ENCODE measurements at regions of chr13 and their contacts with region 1.

Region 1: GRCh38 chr13:48580185-48580803 is 47.4 kb upstream of the RCBTB2 start:
- DNase-seq: peak; percentile 83
- ATAC-seq: peak; percentile 51
- H3K4me3 Mint-ChIP-seq: no peak overlapping the region
- H3K27ac Mint-ChIP-seq: no peak overlapping the region
- H3K4me1 Mint-ChIP-seq: peaks cover 52% of the 10 kb centered on the region
- H3K27me3 Mint-ChIP-seq: peaks cover 27% of the 10 kb centered on the region

Region 2: GRCh38 chr13:48334534-48335127 is 245.7 kb before region 1 on chr13:
- CTCF ChIA-PET with region 1: interaction called, 129 read pairs
- POLR2A ChIA-PET with region 1: interaction called, 3 read pairs
- DNase-seq: no peak
- ATAC-seq: peak; percentile 71
- H3K4me3 Mint-ChIP-seq: no peak overlapping the region
- H3K27ac Mint-ChIP-seq: no peak overlapping the region
- H3K4me1 Mint-ChIP-seq: peaks cover 25% of the 10 kb centered on the region
- H3K27me3 Mint-ChIP-seq: no peaks in the 10 kb centered on the region

Region 3: GRCh38 chr13:48400850-48401291 is 179.4 kb before region 1 on chr13:
- CTCF ChIA-PET with region 1: interaction called, 23 read pairs
- POLR2A ChIA-PET with region 1: no interaction called
- DNase-seq: no peak
- ATAC-seq: peak; percentile 62
- H3K4me3 Mint-ChIP-seq: peak overlapping the region; percentile 44
- H3K27ac Mint-ChIP-seq: peak overlapping the region; percentile 71
- H3K4me1 Mint-ChIP-seq: peaks cover 64% of the 10 kb centered on the region
- H3K27me3 Mint-ChIP-seq: no peaks in the 10 kb centered on the region

Region 4: DNA sequence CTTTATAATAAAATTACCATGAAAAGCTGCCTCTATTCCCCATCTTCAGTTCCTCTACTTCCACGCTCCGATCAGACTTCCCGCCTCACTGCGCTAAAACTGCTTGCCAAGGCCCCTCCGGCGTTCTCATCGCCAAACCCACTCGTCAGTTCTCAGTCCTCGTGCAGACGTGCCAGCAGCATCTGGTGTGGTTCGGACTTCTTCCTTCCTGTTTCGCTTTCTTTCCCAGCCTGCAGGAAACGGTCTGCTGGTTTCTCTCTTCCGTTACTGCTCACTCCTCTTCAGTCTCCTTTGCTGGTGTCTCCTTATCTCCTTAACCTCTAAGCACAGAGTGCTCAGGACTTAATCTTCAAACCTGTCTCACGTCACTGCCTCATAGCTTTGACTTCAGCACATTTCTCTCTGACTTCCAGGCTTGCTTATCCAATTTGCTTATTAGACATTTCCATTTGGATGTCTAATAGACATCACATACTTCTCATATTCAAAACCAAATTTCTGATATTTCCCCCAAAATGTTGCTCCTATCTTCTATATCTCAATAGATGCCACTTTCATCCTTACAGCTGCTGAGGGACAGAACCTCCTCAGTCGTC is 87.7 kb before region 1 on chr13:
- CTCF ChIA-PET with region 1: interaction called, 19 read pairs
- POLR2A ChIA-PET with region 1: interaction called, 8 read pairs
- DNase-seq: peak; percentile 90
- ATAC-seq: peak; percentile 85
- H3K4me3 Mint-ChIP-seq: no peak overlapping the region
- H3K27ac Mint-ChIP-seq: no peak overlapping the region
- H3K4me1 Mint-ChIP-seq: peaks cover 61% of the 10 kb centered on the region
- H3K27me3 Mint-ChIP-seq: no peaks in the 10 kb centered on the region

Region 5: DNA sequence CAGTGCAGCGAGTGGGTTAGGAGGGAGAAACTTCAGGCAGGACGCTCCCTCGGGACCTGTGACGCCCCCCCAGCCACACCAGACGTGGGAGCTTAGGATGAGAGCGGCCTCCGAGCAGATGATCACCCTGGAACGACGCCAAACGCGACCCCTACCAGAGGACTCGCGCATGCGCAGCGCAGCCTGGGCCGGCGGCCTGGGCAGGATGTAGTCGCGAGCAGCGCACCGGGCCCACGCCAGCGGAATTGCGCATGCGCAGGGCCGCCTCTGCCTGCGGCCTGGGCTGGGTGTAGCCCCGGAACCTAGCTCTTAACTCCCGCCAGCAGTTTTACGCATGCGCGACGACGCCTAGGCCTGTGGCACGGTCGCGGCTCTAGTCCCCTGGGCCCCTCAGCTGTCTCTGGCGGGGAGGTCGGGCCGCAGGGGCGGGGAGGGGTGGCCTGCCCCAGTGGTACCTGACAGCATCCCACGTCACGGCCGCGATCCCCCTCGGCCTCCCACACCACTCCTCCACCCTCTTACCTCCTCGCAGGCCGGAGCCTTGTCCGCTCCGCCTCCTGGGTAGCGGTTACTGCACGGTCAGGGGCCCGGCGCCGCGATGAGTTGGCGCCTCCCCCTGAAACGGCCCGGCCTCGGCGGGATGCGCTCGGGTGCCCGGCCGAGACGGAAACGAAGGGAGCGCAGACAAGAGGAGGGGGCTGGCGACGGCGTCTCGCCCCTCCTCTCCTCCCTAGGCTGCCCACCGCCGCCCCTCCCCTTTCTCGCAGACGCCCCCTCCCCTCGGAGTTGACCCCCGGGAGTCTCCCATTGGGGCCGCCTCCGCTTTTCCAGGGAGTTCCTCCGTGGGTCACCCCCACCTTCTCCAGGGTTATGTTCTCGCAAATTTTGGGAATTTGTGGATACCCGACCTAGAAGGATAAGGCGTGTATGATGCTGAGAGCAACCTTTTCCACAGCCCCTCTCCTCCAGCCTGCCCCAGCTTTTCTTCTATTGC is 47.5 kb before region 1 on chr13 and contains the start of gene RCBTB2:
- CTCF ChIA-PET with region 1: interaction called, 22 read pairs
- POLR2A ChIA-PET with region 1: interaction called, 6 read pairs
- DNase-seq: peak; percentile 99
- ATAC-seq: peak; percentile 93
- H3K4me3 Mint-ChIP-seq: peak within 1 kb of the TSS; percentile 92
- H3K27ac Mint-ChIP-seq: peak within 1 kb of the TSS; percentile 99
- H3K4me1 Mint-ChIP-seq: peaks cover 44% of the 10 kb centered on the region
- H3K27me3 Mint-ChIP-seq: no peaks in the 10 kb centered on the region
- total RNA-seq, gene RCBTB2: 31.0 to 31.5 TPM

Region 6: DNA sequence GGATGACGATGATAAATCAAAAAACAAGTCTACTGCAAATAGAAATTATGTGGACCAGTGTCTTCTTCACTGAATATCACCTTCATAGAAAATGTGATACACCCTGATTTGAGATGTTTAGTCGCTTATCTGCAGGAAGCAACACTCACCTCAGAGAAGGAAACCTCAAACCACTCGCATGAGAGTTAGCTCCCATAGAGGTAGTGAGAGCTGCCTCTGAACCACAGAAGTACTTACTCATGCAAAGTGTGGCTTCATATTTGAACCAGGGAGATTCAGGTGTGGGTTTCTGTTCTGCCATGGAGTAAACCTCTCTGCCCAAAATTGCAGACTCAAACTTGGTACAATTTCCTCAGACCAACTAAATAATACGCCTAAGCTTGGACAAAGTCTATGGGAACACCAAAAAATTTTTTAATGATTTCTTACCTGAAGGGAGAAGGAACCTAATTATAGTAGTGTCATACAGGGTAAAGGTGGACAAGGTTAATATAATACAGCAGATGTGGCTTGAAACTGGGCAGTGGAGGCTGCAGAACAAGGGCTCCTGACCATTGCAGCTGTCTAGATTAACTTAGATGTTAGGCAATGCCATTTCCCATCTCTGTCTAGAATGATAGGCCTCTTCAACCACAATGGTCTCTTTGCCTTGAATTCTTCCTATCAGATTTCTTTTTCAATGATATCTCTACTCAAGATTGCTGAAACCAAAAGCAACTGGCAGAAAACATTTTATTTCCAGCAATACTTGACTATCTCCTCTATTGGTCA is 17.8 kb before region 1 on chr13:
- CTCF ChIA-PET with region 1: interaction called, 29 read pairs
- POLR2A ChIA-PET with region 1: no interaction called
- DNase-seq: peak; percentile 93
- ATAC-seq: peak; percentile 94
- H3K4me3 Mint-ChIP-seq: peak overlapping the region; percentile 70
- H3K27ac Mint-ChIP-seq: peak overlapping the region; percentile 90
- H3K4me1 Mint-ChIP-seq: peaks cover 77% of the 10 kb centered on the region
- H3K27me3 Mint-ChIP-seq: peaks cover 14% of the 10 kb centered on the region

Region 7: GRCh38 chr13:48769107-48769704 is 188.9 kb after region 1 on chr13:
- CTCF ChIA-PET with region 1: interaction called, 10 read pairs
- POLR2A ChIA-PET with region 1: no interaction called
- DNase-seq: peak; percentile 93
- ATAC-seq: peak; percentile 96
- H3K4me3 Mint-ChIP-seq: no peak overlapping the region
- H3K27ac Mint-ChIP-seq: no peak overlapping the region
- H3K4me1 Mint-ChIP-seq: peaks cover 21% of the 10 kb centered on the region
- H3K27me3 Mint-ChIP-seq: peaks cover 16% of the 10 kb centered on the region